Activated CD8-positive, alpha-beta T cell treated with anti-CD3 and anti-CD28 coated beads, Interleukin-2, amount 10 ng/mL, durations not matched to agents 7 days and 5 days (primary cell): ENCODE measurements at regions of chr9 and their contacts with region 1.

Region 1: DNA sequence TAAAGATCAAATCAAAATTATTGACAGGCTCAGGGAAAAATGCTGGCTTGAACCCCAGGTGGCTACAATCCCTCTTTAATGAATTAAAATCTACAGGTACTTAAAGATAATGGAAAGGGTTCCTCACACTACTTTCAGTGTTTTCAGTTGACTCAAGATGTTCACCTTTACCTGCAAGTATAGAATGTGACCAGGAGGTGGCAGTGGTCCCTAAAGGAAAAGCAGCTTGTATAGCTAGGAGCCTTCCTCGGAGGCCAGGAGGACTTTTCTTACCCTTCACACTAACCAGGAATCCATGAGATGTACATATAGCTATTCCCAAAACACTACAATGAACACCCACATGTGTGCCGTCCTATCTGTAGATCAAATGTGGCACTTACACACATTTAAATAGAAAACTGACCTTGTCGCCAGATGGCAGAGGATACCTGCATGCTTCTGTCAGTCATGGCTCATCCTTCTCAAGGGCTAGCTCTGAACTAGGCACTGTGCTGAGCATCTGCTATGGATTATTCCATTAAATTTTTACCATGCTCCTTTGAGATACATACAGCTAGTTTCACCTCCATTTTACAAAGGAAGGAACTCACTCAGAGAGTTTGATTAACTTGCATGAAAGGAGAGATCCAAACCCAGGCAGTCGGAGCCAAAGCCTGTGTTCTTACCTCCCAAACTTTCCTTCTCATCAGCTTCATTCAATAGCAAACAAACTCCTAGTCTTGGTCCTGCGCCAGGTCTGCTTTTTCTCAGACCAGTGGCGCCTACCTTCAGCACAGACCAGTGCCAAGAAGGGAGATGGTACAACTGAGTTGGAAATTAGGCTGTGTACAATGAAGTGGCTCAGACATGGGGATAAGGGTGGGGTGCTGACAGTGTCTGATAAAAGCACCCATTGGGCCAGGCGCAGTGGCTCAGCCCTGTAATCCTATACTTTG is 24.5 kb downstream of the C9orf152 start:
- DNase-seq: peak; percentile 77
- ATAC-seq: peak; percentile 76
- H3K4me3 Mint-ChIP-seq: no peak overlapping the region
- H3K27ac Mint-ChIP-seq: no peak overlapping the region
- H3K4me1 Mint-ChIP-seq: peaks cover 3% of the 10 kb centered on the region
- H3K27me3 Mint-ChIP-seq: peaks cover 2% of the 10 kb centered on the region

Region 2: GRCh38 chr9:110217656-110218099 is 34.2 kb after region 1 on chr9:
- CTCF ChIA-PET with region 1: interaction called, 46 read pairs
- POLR2A ChIA-PET with region 1: no interaction called
- DNase-seq: peak; percentile 23
- ATAC-seq: no peak
- H3K4me3 Mint-ChIP-seq: no peak overlapping the region
- H3K27ac Mint-ChIP-seq: no peak overlapping the region
- H3K4me1 Mint-ChIP-seq: peaks cover 12% of the 10 kb centered on the region
- H3K27me3 Mint-ChIP-seq: peaks cover 11% of the 10 kb centered on the region

Region 3: DNA sequence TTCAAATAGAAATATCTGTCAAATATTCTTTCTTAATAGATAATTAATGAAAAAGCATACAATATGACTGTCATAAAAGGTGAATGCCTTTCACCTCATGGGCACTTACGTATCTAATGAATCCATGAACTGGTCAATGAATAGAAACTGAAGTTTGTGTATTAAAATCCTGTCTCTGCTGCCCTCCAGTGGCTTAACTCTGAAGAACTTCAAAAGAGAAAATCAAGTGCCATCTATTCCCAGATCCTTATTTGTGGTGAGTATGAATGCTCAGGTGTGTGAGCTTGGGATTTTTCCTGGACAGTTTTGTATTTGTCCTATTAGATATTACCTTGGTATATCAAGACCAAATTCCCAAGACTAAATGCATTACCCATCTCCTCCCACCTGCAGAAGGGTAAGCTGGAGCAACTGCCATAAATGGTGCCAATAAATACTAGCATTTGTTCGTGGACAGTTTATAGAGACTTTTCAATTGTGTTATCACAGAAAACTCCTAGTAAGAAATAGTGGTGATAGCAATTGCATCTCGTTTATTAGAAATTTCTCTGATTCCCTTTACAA is 440.1 kb after region 1 on chr9:
- CTCF ChIA-PET with region 1: interaction called, 15 read pairs
- POLR2A ChIA-PET with region 1: no interaction called
- DNase-seq: peak; percentile 35
- ATAC-seq: no peak
- H3K4me3 Mint-ChIP-seq: no peak overlapping the region
- H3K27ac Mint-ChIP-seq: no peak overlapping the region
- H3K4me1 Mint-ChIP-seq: no peaks in the 10 kb centered on the region
- H3K27me3 Mint-ChIP-seq: no peaks in the 10 kb centered on the region